Caco-2 (cell line): ENCODE measurements at regions of chr12 and their contacts with region 1.

Region 1: DNA sequence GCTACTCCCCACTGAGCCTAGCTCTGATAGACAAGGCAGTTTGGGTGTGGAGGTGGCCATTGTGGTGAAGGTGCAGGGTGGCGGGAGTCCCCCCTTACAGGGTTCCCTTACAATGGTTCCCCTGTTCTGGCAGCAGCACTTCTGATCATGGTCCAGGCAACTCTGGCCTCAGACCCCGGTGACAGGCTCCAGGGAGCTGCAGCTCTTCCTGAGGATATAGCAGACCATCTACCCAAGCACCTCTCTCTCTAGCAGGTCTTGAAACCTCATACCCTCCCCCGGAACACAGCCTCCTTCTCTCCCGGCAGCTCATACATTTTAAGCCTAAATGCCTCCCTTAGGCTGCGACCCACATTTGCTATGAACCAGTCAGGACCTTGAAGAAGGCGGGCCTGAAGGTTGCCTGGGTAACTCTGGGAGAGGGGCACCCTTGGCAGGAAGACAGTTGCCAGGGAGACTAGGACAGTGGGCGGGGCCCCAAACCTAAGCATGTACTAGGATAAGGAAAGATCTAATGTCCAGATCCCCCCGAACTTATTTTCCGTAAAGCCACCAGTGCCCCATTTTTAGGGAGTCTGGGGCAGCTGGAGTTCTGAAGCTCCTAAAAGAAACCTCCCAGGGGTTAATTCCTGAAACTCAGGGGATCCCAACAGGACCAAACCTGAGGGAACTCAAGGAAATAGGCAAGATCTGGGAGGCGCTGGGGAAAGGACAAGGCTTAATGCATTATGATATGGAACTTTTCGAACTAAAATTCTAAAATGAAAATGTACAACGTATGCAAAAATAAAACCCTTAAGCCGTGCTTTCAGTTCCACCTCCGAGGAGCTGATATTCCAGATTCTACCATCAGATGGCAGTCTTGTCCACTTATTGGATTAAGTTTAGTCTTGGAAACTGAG is 4.5 kb upstream of the GDF11 start:
- DNase-seq: peak; percentile 82 to 84
- H3K4me3 ChIP-seq: peak overlapping the region; percentile 48
- H3K4me3 Mint-ChIP-seq: peak overlapping the region; percentile 77
- H3K27ac Mint-ChIP-seq: peak overlapping the region; percentile 43
- H3K4me1 ChIP-seq: peaks cover 14% of the 10 kb centered on the region
- H3K4me1 Mint-ChIP-seq: peaks cover 28% of the 10 kb centered on the region
- H3K27me3 ChIP-seq: no peaks in the 10 kb centered on the region
- H3K27me3 Mint-ChIP-seq: no peaks in the 10 kb centered on the region
- CTCF ChIP-seq: peak; percentile 70 to 75

Region 2: GRCh38 chr12:55495490-55495889 is 242.9 kb before region 1 on chr12:
- CTCF ChIA-PET with region 1: no interaction called
- POLR2A ChIA-PET with region 1: no interaction called
- intact Hi-C with region 1: no loop called
- DNase-seq: no peak
- H3K4me3 ChIP-seq: no peak overlapping the region
- H3K4me3 Mint-ChIP-seq: no peak overlapping the region
- H3K27ac Mint-ChIP-seq: no peak overlapping the region
- H3K4me1 ChIP-seq: peaks cover 26% of the 10 kb centered on the region
- H3K4me1 Mint-ChIP-seq: peaks cover 14% of the 10 kb centered on the region
- H3K27me3 ChIP-seq: no peaks in the 10 kb centered on the region
- H3K27me3 Mint-ChIP-seq: no peaks in the 10 kb centered on the region
- CTCF ChIP-seq: no peak

Region 3: GRCh38 chr12:55681142-55682077 is 57.0 kb before region 1 on chr12:
- CTCF ChIA-PET with region 1: interaction called, 35 read pairs
- POLR2A ChIA-PET with region 1: no interaction called
- intact Hi-C with region 1: loop called (anchors 1 kb)
- DNase-seq: peak; percentile 86
- H3K4me3 ChIP-seq: peak overlapping the region; percentile 59
- H3K4me3 Mint-ChIP-seq: peak overlapping the region; percentile 96
- H3K27ac Mint-ChIP-seq: peak overlapping the region; percentile 84
- H3K4me1 ChIP-seq: peaks cover 4% of the 10 kb centered on the region; the same call in 1 of the 2 replicates
- H3K4me1 Mint-ChIP-seq: peaks cover 8% of the 10 kb centered on the region
- H3K27me3 ChIP-seq: no peaks in the 10 kb centered on the region
- H3K27me3 Mint-ChIP-seq: no peaks in the 10 kb centered on the region
- CTCF ChIP-seq: peak; percentile 58 to 82

Region 4: DNA sequence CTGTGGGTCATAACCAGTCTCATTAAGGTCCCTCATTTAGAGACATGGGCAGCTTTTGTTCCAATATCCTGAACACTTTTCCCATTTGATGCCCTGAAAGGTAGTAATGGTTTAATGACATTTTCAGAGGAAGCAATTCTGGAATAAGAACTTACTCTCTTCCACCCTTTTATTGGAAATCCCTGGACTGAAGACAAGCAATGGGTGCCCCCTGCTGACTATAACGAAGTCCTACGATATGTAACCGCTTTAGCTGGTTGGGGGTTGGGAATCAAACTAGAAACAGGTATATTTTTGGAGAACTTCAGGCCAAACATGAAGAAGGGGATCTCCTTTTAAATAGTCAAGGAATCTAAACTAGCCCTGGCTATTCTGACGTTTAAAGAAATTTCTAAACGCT is 58.7 kb after region 1 on chr12:
- CTCF ChIA-PET with region 1: interaction called, 37 read pairs
- POLR2A ChIA-PET with region 1: no interaction called
- intact Hi-C with region 1: loop called (anchors 1 kb)
- DNase-seq: peak in 1 of 2 experiments; percentile 56
- H3K4me3 ChIP-seq: no peak overlapping the region
- H3K4me3 Mint-ChIP-seq: no peak overlapping the region
- H3K27ac Mint-ChIP-seq: peak overlapping the region; percentile 32
- H3K4me1 ChIP-seq: no peaks in the 10 kb centered on the region
- H3K4me1 Mint-ChIP-seq: peaks cover 7% of the 10 kb centered on the region
- H3K27me3 ChIP-seq: no peaks in the 10 kb centered on the region
- H3K27me3 Mint-ChIP-seq: no peaks in the 10 kb centered on the region
- CTCF ChIP-seq: peak; percentile 53 to 61

Region 5: GRCh38 chr12:55926738-55927587 is 188.6 kb after region 1 on chr12:
- CTCF ChIA-PET with region 1: interaction called, 11 read pairs
- POLR2A ChIA-PET with region 1: no interaction called
- intact Hi-C with region 1: loop called (anchors 2 kb)
- DNase-seq: peak; percentile 89 to 95
- H3K4me3 ChIP-seq: peak overlapping the region; percentile 74
- H3K4me3 Mint-ChIP-seq: peak overlapping the region; percentile 98
- H3K27ac Mint-ChIP-seq: peak overlapping the region; percentile 97
- H3K4me1 ChIP-seq: peaks cover 19% of the 10 kb centered on the region
- H3K4me1 Mint-ChIP-seq: peaks cover 35% of the 10 kb centered on the region
- H3K27me3 ChIP-seq: no peaks in the 10 kb centered on the region
- H3K27me3 Mint-ChIP-seq: no peaks in the 10 kb centered on the region
- CTCF ChIP-seq: peak; percentile 79 to 86

Region 6: DNA sequence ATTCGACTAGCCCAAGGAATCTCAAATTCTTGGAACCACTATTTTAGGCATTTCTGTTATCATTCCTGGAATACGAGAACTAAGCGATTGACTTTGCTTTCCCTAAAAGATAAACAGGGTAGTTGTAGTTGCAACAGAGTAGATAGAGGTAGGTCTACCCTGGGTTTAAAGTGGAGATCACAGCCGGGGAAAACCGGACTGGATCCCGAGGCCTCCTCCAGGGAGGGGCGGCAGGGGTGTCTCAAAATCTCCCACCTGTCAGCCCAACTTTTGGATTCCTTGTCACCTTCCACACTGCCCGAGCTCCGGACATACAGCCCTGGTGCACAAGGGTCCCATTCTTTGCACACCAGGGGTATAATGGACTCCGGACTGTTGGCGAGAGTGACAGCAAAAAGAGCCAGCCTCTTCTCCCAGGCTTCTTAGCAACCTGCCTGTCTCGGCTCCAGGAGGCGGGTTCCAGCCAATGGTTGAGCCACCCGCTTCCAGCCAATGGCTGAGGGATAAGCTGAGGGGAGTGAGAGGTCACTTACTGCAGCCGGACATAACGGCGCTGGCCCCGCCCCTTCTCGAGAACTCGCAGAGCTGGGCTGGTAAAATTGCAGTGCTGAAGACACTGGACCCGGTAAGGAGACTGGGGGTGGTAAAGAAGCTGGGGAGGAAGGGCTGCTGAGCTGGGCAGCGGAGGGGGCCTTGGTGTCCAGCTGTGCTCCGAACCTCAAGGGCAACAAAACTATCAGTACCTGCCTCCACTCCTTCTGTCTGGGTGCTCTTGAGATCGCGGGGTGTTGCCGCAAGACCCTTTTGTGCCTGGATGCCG is 258.6 kb after region 1 on chr12 and contains the start of gene SUOX:
- CTCF ChIA-PET with region 1: interaction called, 7 read pairs
- POLR2A ChIA-PET with region 1: interaction called, 9 read pairs
- intact Hi-C with region 1: loop called (anchors 2 kb)
- DNase-seq: peak; percentile 97 to 98
- H3K4me3 ChIP-seq: peak within 1 kb of the TSS; percentile 58
- H3K4me3 Mint-ChIP-seq: peak within 1 kb of the TSS; percentile 98
- H3K27ac Mint-ChIP-seq: peak within 1 kb of the TSS; percentile 87
- H3K4me1 ChIP-seq: peaks cover 9% of the 10 kb centered on the region
- H3K4me1 Mint-ChIP-seq: peaks cover 15% of the 10 kb centered on the region
- H3K27me3 ChIP-seq: no peaks in the 10 kb centered on the region
- H3K27me3 Mint-ChIP-seq: no peaks in the 10 kb centered on the region
- CTCF ChIP-seq: no peak
- total RNA-seq, gene SUOX: 37.9 and 40.8 TPM in 2 replicates